SK-N-SH (cell line): ENCODE measurements at regions of chr5 and their contacts with region 1.

Region 1: DNA sequence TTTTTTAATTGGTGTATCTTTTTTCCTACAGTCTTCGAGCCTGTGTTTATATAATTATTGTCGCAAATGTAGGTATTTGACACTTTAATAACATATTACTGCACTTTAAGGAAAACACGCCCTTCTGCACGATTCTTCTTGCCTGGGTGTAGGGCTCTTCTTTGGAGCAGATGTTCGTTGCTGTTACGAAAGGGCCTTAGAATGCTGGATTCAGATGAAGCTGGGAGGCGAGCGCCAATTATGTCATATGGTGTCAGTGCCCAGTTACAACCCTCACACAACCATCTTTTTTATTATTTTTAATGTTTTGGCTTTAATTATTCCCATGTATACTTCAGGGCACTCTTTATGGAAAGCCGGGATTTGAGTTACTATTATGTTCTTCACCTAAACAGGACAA is 553.0 kb downstream of the EBF1 start:
- DNase-seq: no peak
- H3K4me3 ChIP-seq: no peak overlapping the region
- H3K27ac ChIP-seq: no peak overlapping the region
- H3K4me1 ChIP-seq: no peaks in the 10 kb centered on the region
- H3K27me3 ChIP-seq: no peaks in the 10 kb centered on the region
- CTCF ChIP-seq: no peak
- EP300 ChIP-seq: no peak
- RAD21 ChIP-seq: no peak

Region 2: DNA sequence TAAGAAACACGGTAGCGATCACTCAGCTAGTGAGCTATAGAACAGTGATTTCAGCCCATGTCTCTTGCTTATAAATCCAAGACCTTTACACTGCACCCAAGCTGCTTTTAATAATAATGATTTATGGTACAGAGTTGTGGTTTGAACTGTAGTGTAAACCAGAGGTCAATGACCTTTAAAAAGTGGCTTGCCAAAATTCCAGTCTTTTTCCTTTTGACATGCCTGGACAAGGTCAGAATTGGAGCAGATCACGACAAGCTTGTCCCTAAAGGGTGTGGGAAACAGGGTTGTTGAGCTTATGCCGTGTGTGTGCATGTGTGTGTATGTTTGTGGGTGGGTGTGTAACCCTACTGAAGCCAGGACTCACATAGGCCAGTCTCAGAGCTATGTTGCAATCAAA is 462.5 kb before region 1 on chr5:
- CTCF ChIA-PET with region 1: no interaction called
- POLR2A ChIA-PET with region 1: no interaction called
- DNase-seq: no peak
- H3K4me3 ChIP-seq: no peak overlapping the region
- H3K27ac ChIP-seq: no peak overlapping the region; a peak in 1 of 4 replicates
- H3K4me1 ChIP-seq: no peaks in the 10 kb centered on the region
- H3K27me3 ChIP-seq: peaks cover 9% of the 10 kb centered on the region
- CTCF ChIP-seq: no peak
- EP300 ChIP-seq: no peak
- RAD21 ChIP-seq: no peak

Region 3: GRCh38 chr5:158560170-158560569 is 13.4 kb after region 1 on chr5:
- CTCF ChIA-PET with region 1: interaction called, 10 read pairs
- POLR2A ChIA-PET with region 1: no interaction called
- DNase-seq: no peak
- H3K4me3 ChIP-seq: no peak overlapping the region
- H3K27ac ChIP-seq: no peak overlapping the region
- H3K4me1 ChIP-seq: no peaks in the 10 kb centered on the region
- H3K27me3 ChIP-seq: no peaks in the 10 kb centered on the region
- CTCF ChIP-seq: no peak
- EP300 ChIP-seq: no peak
- RAD21 ChIP-seq: no peak